Heart right ventricle (tissue), 16 donors: ENCODE measurements at regions of chr7 and their contacts with region 1.

Region 1: DNA sequence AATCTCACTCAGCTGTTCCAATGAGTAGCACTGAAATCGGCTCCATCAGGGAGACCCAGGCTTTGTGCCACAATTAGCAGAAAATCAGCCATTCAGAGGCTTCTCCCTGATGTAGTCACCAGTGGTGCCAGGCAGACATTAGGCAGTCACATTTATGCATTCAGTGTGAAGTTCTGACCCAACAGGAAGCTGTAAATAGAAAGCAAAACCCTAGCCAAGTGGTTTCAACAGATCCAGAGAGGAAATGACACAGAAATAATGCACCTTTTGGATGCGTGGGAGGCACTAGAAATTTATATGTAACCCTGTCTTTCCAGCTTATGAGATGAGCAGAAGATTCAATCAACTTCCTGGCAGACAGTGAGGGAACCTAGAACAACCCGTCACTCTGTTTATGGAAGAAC is 186.4 kb downstream of the PDE1C start:
- DNase-seq: peak in 1 of 2 donors; percentile 23
- ATAC-seq: peak in 7 of 8 donors; percentile 47 to 78 (median 56)
- H3K4me3 ChIP-seq: no peak overlapping the region
- H3K27ac ChIP-seq: peak overlapping the region; percentile 6 to 88 (median 82)
- H3K4me1 ChIP-seq: peaks cover 7 to 79% (median 44%) of the 10 kb centered on the region in 9 donors
- H3K27me3 ChIP-seq: no peaks in the 10 kb centered on the region
- CTCF ChIP-seq: no peak

Region 2: GRCh38 chr7:31744294-31744874 is 139.4 kb before region 1 on chr7:
- intact Hi-C with region 1: no loop called
- DNase-seq: peak; percentile 35 to 51
- ATAC-seq: peak in 5 of 8 donors; percentile 60 to 76 (median 63)
- H3K4me3 ChIP-seq: no peak overlapping the region
- H3K27ac ChIP-seq: no peak overlapping the region
- H3K4me1 ChIP-seq: no peaks in the 10 kb centered on the region
- H3K27me3 ChIP-seq: no peaks in the 10 kb centered on the region
- CTCF ChIP-seq: peak; percentile 66 to 89 (median 84)

Region 3: GRCh38 chr7:31811650-31812461 is 71.9 kb before region 1 on chr7:
- intact Hi-C with region 1: no loop called
- DNase-seq: peak in 1 of 2 donors; percentile 9
- ATAC-seq: peak; percentile 46 to 85 (median 58)
- H3K4me3 ChIP-seq: no peak overlapping the region
- H3K27ac ChIP-seq: peak overlapping the region in 4 of 10 donors; percentile 40 to 79 (median 52)
- H3K4me1 ChIP-seq: peaks cover 0 to 23% (median 0%) of the 10 kb centered on the region in 9 donors
- H3K27me3 ChIP-seq: no peaks in the 10 kb centered on the region
- CTCF ChIP-seq: no peak

Region 4: GRCh38 chr7:31982962-31983361 is 99.2 kb after region 1 on chr7:
- intact Hi-C with region 1: loop called in 1 of 10 experiments (anchors 2 kb)
- DNase-seq: no peak
- ATAC-seq: peak in 7 of 8 donors; percentile 64 to 89 (median 71)
- H3K4me3 ChIP-seq: no peak overlapping the region
- H3K27ac ChIP-seq: peak overlapping the region in 7 of 10 donors; percentile 16 to 53 (median 37)
- H3K4me1 ChIP-seq: peaks cover 0 to 76% (median 38%) of the 10 kb centered on the region in 9 donors
- H3K27me3 ChIP-seq: no peaks in the 10 kb centered on the region
- CTCF ChIP-seq: no peak

Region 5: GRCh38 chr7:32036557-32036956 is 152.8 kb after region 1 on chr7:
- intact Hi-C with region 1: loop called in 2 of 10 experiments (anchors 5 kb)
- DNase-seq: no peak
- ATAC-seq: no peak
- H3K4me3 ChIP-seq: no peak overlapping the region
- H3K27ac ChIP-seq: no peak overlapping the region
- H3K4me1 ChIP-seq: peaks cover 0 to 82% (median 43%) of the 10 kb centered on the region in 9 donors
- H3K27me3 ChIP-seq: no peaks in the 10 kb centered on the region
- CTCF ChIP-seq: no peak

Region 6: GRCh38 chr7:32043714-32044113 is 160.0 kb after region 1 on chr7:
- intact Hi-C with region 1: loop called in 2 of 10 experiments (anchors 5 kb)
- DNase-seq: no peak
- ATAC-seq: peak in 4 of 8 donors; percentile 41 to 71 (median 66)
- H3K4me3 ChIP-seq: no peak overlapping the region
- H3K27ac ChIP-seq: peak overlapping the region in 4 of 10 donors; percentile 6 to 51 (median 16)
- H3K4me1 ChIP-seq: peaks cover 0 to 90% (median 36%) of the 10 kb centered on the region in 9 donors
- H3K27me3 ChIP-seq: no peaks in the 10 kb centered on the region
- CTCF ChIP-seq: no peak

Region 7: DNA sequence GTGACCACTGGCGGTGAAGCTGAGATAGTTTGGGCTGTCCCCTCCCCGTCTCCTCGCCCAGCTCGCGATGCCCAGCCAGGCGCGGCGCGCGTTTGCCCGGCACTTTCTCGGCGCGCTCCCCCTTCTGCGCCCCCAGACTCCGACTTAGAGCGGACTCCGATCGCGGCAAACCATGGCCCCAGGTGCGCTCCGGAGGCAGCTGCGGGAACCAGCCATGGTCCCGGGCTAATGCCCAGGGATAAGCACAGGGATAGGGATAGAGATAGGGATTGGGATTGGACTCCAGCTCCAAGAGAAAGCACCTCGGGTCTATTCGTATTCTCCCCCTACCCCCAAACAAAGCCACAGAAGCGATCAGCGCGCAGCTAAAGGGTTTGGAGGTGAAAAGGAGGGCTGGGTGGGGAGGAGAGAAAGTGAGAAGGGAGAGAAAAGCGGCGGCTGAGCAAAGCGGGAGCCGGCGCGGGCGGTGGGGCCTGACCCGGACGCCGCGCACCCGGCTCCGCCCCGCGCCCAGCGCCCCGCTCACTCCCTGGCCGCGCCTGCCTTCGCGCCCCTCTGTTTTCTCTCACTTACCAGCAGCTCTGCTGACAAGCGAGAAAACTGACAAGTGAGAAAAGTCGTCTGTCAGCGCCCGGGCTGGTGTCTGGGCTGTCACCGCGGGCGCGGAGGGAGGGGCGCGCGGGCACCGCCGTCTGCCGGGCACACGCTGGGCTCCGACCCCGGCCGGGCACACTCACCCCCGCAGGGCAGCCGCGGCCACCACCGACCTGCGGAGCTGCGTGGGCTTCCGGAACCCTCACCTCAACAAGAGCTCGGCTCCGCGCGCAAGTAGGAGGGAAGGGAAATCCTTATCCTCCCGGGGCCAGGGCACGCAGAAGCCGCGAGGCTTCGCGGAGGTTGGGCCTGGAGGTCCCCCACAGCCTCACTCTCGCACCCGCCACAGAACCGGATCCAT is 186.9 kb after region 1 on chr7 and contains the start of gene PDE1C:
- intact Hi-C with region 1: loop called in 3 of 10 experiments (anchors 5 to 10 kb)
- DNase-seq: peak; percentile 75 to 78
- ATAC-seq: peak; percentile 78 to 93 (median 83)
- H3K4me3 ChIP-seq: peak within 1 kb of the TSS; percentile 44 to 70 (median 58)
- H3K27ac ChIP-seq: peak within 1 kb of the TSS; percentile 82 to 94 (median 90)
- H3K4me1 ChIP-seq: peaks cover 3 to 50% (median 27%) of the 10 kb centered on the region in 9 donors
- H3K27me3 ChIP-seq: peaks cover 0 to 48% (median 4%) of the 10 kb centered on the region in 7 donors
- CTCF ChIP-seq: no peak
- total RNA-seq, gene PDE1C: 124 to 315 (median 197) TPM

Region 8: DNA sequence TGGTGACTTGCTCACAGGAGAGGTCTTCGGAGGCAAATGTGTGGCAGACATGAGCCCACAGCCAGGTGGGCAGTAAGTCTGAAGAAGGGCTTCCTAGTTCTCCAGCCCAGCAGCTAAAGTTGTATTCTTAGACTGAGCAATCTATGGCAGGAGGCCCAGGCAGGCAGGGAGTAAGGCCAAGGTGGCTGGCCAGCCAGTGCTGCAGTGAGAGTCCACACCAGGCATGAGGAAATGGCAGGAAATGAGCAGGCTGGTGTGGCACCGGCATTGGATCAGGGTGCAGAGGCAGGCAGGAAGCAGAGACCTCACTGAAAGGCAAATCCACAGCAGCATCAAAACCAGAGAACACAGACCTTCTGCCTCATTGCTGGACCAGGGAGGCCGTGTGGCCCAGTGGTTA is 271.0 kb after region 1 on chr7:
- intact Hi-C with region 1: loop called in 1 of 10 experiments (anchors 10 kb)
- DNase-seq: peak; percentile 67 to 76
- ATAC-seq: peak; percentile 56 to 89 (median 84)
- H3K4me3 ChIP-seq: no peak overlapping the region
- H3K27ac ChIP-seq: peak overlapping the region in 9 of 10 donors; percentile 11 to 87 (median 81)
- H3K4me1 ChIP-seq: peaks cover 0 to 76% (median 40%) of the 10 kb centered on the region in 9 donors
- H3K27me3 ChIP-seq: no peaks in the 10 kb centered on the region
- CTCF ChIP-seq: no peak

Region 9: DNA sequence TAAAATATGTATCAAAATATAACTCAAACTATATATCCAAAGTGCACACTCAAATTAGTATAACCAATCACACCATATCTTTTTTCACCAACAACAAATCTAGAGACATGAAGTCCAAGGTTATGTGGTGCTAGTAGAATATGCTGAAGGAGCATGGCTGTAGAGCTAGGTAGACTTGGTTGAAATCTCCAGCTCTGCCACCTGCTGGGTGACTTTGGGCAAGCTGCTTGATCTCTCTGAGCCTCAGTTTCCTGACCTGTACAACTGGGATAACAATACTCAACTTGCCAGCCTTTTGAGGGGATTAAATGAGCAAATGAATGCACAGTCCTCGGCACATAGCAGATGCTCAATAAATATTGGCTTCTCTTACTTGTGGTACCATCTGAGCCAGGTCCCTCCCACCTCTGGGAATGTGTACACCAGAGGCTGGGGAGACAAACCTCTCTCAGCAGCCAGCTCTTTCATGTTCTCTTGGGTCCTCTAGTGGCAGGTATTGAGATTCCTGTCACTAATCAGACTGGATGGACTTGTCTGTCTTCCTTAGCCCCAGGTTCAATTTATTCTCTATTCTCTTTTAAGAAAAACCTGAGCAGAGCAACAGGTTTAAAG is 280.7 kb after region 1 on chr7:
- intact Hi-C with region 1: loop called in 3 of 10 experiments (anchors 10 kb)
- DNase-seq: peak in 1 of 2 donors; percentile 50
- ATAC-seq: peak; percentile 36 to 80 (median 76)
- H3K4me3 ChIP-seq: no peak overlapping the region
- H3K27ac ChIP-seq: peak overlapping the region in 7 of 10 donors; percentile 51 to 88 (median 75)
- H3K4me1 ChIP-seq: peaks cover 9 to 37% (median 27%) of the 10 kb centered on the region in 9 donors
- H3K27me3 ChIP-seq: no peaks in the 10 kb centered on the region
- CTCF ChIP-seq: peak; percentile 22 to 65 (median 50)